ENCODE measurements at regions of chr18 and their contacts with region 1.

Region 1: GRCh38 chr18:13076886-13077285 is 85.7 kb downstream of the CEP192 start:
- DNase-seq: no peak
- H3K4me3 ChIP-seq: no peak overlapping the region
- H3K27ac ChIP-seq: no peak overlapping the region
- H3K4me1 ChIP-seq: no peaks in the 10 kb centered on the region
- H3K27me3 ChIP-seq: no peaks in the 10 kb centered on the region
- CTCF ChIP-seq: no peak

Region 2: DNA sequence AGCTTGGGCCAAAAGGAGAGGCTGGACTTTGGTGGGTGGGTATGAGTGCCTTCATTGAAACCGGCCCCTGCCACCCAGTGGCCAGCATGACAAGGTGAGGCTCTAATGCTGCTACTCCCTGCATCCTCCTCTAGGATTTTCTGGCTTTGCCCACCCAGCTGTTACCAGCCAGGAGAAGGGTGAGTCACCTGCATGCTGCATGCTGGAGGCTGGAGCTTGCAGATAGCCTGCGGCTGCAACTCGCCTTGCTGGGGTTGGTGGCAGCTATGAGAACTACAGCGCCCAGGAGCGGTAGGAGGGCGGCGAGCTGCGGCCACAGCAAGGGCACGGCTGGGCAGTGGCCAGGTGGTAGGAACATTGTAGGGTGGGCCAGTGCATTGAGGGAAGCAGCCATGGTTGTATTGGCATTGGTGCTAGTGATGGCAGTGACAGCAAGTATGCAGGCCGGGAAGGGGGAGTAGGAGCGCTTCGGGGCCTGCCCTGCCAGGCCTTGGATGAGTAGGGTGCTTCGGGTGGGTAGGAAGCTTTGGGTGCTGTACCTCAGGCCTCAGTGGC is 1542.9 kb before region 1 on chr18:
- CTCF ChIA-PET with region 1: no interaction called
- POLR2A ChIA-PET with region 1: no interaction called
- intact Hi-C with region 1: no loop called
- DNase-seq: peak in 1 of 2 experiments; percentile 37
- H3K4me3 ChIP-seq: no peak overlapping the region
- H3K27ac ChIP-seq: no peak overlapping the region
- H3K4me1 ChIP-seq: no peaks in the 10 kb centered on the region
- H3K27me3 ChIP-seq: peaks cover 81% of the 10 kb centered on the region
- CTCF ChIP-seq: no peak

Region 3: GRCh38 chr18:13051950-13052349 is 24.9 kb before region 1 on chr18:
- CTCF ChIA-PET with region 1: no interaction called
- POLR2A ChIA-PET with region 1: no interaction called
- intact Hi-C with region 1: no loop called
- DNase-seq: no peak
- H3K4me3 ChIP-seq: no peak overlapping the region
- H3K27ac ChIP-seq: no peak overlapping the region
- H3K4me1 ChIP-seq: no peaks in the 10 kb centered on the region
- H3K27me3 ChIP-seq: no peaks in the 10 kb centered on the region
- CTCF ChIP-seq: no peak

Region 4: GRCh38 chr18:14970027-14970426 is 1893.1 kb after region 1 on chr18:
- CTCF ChIA-PET with region 1: interaction called, 13 read pairs
- POLR2A ChIA-PET with region 1: no interaction called
- intact Hi-C with region 1: no loop called
- DNase-seq: peak; percentile 39 to 71
- H3K4me3 ChIP-seq: no peak overlapping the region
- H3K27ac ChIP-seq: no peak overlapping the region
- H3K4me1 ChIP-seq: peaks cover 52% of the 10 kb centered on the region
- H3K27me3 ChIP-seq: no peaks in the 10 kb centered on the region
- CTCF ChIP-seq: no peak

Measured in PC-9 (cell line).